ENCODE measurements at regions of chr17 and their contacts with region 1.

Region 1: DNA sequence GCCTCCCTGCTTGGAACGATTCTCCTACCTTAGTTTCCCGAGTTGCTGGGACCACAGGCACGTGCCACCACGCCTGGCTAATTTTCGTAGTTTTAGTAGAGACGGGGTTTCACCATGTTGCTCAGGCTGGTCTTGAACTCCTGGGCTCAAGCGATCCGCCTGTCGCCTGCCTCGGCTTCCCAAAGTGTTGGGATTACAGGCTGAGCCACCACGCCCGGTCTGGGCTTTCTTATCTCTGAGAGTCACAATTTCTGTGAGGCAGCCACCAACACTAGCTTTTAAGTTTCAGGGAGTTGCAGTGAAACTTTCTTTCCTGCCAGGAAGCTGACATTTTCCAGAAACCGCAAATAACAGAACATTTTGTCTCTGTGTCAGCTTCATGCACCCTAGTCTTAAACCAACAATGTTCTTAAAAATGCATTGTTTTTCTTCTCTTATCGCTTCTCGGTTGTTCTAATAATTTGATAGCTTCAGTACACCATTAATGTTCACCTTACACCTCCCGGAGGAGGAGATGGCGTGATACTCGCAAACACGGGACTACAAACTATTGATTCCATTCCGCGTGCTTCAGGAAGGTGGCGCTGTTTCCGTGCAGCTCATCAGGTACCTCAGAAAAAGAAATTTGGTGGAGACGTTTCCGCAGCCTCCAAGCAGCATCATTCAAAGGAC is 7.4 kb upstream of the DHRS7B start:
- DNase-seq: peak; percentile 83
- H3K4me3 Mint-ChIP-seq: peak overlapping the region; percentile 16
- H3K27ac Mint-ChIP-seq: no peak overlapping the region
- H3K4me1 Mint-ChIP-seq: peaks cover 6% of the 10 kb centered on the region
- H3K27me3 Mint-ChIP-seq: peaks cover 2% of the 10 kb centered on the region

Region 2: GRCh38 chr17:21090902-21091618 is 28.3 kb before region 1 on chr17:
- CTCF ChIA-PET with region 1: no interaction called
- intact Hi-C with region 1: no loop called
- DNase-seq: no peak
- H3K4me3 Mint-ChIP-seq: no peak overlapping the region
- H3K27ac Mint-ChIP-seq: no peak overlapping the region
- H3K4me1 Mint-ChIP-seq: no peaks in the 10 kb centered on the region
- H3K27me3 Mint-ChIP-seq: no peaks in the 10 kb centered on the region

Region 3: GRCh38 chr17:21108651-21109050 is 10.7 kb before region 1 on chr17:
- CTCF ChIA-PET with region 1: interaction called, 12 read pairs
- intact Hi-C with region 1: no loop called
- DNase-seq: no peak
- H3K4me3 Mint-ChIP-seq: no peak overlapping the region
- H3K27ac Mint-ChIP-seq: no peak overlapping the region
- H3K4me1 Mint-ChIP-seq: no peaks in the 10 kb centered on the region
- H3K27me3 Mint-ChIP-seq: no peaks in the 10 kb centered on the region